GM10248 (cell line): ENCODE measurements at regions of chrX and their contacts with region 1.

Region 1: GRCh38 chrX:70096052-70096451 is 33.8 kb downstream of the OTUD6A start:
- DNase-seq: no peak
- CTCF ChIP-seq: no peak

Region 2: DNA sequence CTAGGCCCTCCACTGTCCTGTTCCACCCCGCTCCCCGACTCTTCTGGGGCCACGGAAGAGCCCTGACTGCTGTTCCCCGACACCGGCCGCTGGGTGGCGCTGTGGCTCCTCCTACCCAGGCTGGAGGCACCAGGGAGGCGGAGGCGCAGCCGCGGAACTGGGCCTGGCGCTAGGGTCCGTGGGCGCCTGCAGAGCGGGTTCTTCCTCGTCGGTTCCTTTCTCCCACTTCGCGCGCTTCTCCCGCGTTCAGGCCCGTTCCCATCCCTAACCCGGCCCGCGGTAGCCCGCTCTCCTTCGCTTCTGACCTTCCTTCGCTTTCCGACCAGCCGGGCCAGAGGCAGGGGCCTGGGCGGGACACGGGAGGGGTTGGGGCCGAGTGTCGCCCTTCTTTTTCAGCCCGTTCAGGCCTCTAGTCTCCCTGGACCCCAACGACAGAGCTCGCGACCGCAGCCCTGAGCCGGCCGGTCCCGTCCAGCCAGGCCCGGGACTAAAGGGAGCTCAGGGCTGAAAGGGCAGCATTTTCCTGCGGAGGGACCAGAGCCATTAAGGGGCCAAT is 557.7 kb before region 1 on chrX:
- CTCF ChIA-PET with region 1: interaction called, 18 read pairs
- POLR2A ChIA-PET with region 1: no interaction called
- DNase-seq: peak; percentile 74
- CTCF ChIP-seq: peak; percentile 56

Region 3: GRCh38 chrX:70030301-70030767 is 65.7 kb before region 1 on chrX:
- CTCF ChIA-PET with region 1: interaction called, 20 read pairs
- POLR2A ChIA-PET with region 1: no interaction called
- DNase-seq: peak; percentile 50
- CTCF ChIP-seq: peak; percentile 67

Region 4: GRCh38 chrX:70039756-70040155 is 56.3 kb before region 1 on chrX:
- CTCF ChIA-PET with region 1: interaction called, 20 read pairs
- POLR2A ChIA-PET with region 1: no interaction called
- DNase-seq: no peak
- CTCF ChIP-seq: no peak

Region 5: GRCh38 chrX:70062076-70062475 is 34.0 kb before region 1 on chrX and contains the start of gene OTUD6A:
- CTCF ChIA-PET with region 1: no interaction called
- POLR2A ChIA-PET with region 1: no interaction called
- DNase-seq: no peak
- CTCF ChIP-seq: no peak